AG04450 (cell line): ENCODE measurements at regions of chr1 and their contacts with region 1.

Region 1: GRCh38 chr1:21368515-21369289 is 71.2 kb upstream of the NBPF3 start:
- DNase-seq: peak; percentile 59
- H3K4me3 ChIP-seq: no peak overlapping the region
- H3K27ac ChIP-seq: no peak overlapping the region
- H3K27me3 ChIP-seq: no peaks in the 10 kb centered on the region
- CTCF ChIP-seq: peak; percentile 100

Region 2: DNA sequence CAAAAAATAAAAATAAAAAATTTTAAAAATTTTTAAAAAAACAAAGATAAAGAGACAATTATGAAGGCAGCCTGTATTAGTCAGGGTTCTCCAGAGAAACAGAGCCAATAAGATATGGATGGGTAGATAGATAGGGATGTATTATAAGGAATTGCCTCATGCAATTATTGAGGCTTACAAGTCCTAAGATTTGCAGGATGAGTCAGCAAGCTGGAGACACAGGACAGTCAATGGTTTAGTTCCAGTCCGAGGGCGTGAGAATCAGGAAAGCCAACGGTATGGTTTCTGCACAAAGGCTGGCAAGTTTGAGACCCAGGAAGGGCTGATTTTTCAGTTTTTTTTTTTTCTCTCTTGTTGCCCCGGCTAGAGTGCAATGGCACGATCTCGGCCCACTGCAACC is 167.9 kb before region 1 on chr1:
- CTCF ChIA-PET with region 1: interaction called, 21 read pairs
- POLR2A ChIA-PET with region 1: no interaction called
- DNase-seq: no peak
- H3K4me3 ChIP-seq: no peak overlapping the region
- H3K27ac ChIP-seq: no peak overlapping the region
- H3K27me3 ChIP-seq: no peaks in the 10 kb centered on the region
- CTCF ChIP-seq: no peak

Region 3: DNA sequence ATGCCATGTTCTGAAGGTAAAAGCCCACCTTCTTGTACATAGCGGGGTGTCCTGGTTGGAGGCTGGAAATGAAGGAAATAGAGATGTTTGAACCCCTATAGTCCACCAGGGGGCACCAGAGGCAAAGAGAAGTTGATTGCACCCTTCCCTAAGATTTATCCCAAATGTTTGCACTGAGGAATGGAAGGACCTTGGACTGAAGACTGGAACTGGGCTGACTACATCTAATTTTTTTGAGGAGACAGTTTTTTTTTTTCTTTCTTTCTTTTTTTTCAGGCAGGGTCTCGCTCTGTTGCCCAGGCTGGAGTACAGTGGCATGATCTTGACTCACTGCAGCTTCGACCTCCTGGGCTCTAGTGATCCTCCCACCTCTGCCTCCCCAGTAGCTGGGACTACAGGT is 136.7 kb before region 1 on chr1:
- CTCF ChIA-PET with region 1: interaction called, 248 read pairs
- POLR2A ChIA-PET with region 1: interaction called, 8 read pairs
- DNase-seq: no peak
- H3K4me3 ChIP-seq: no peak overlapping the region
- H3K27ac ChIP-seq: no peak overlapping the region
- H3K27me3 ChIP-seq: no peaks in the 10 kb centered on the region
- CTCF ChIP-seq: peak; percentile 77

Region 4: DNA sequence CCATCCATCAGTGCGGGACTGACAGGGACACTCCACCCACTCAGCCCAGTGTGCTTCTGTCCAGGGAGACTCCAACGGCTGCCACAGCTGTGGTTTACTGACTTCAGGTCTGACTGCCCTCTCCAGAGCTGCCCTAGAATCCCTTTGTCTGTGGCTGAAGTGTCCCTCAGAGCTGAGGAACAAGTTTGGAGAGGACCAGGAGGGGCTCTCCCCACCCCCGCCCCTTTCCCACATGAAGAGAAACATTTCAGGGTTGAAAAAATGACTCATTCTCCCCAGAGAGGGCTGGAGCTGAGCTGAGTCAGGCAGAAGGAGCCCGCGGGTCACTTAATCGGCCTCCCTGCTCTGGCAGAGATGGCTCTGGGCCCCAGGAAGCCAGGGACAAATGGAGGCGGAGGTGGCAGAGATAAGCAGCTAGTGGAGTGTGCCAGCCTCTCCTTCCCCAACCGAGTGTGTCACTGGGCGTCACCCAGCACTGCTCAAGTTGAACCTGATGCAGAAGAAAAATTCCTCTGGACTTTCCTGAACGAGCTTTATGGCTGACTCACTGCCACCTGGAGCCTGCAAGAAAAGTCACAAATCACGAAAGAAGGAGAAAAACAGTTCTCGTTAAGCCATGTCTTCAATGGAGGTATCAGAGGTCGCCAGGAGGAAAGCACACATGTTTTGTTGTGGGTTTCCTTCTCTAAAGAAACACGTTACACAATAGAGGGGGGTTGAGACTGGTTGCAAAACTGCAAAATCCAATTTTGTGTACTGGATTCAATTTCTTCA is 44.1 kb before region 1 on chr1:
- CTCF ChIA-PET with region 1: interaction called, 11 read pairs
- POLR2A ChIA-PET with region 1: no interaction called
- DNase-seq: no peak
- H3K4me3 ChIP-seq: peak overlapping the region; percentile 13; the same call in 1 of the 2 replicates
- H3K27ac ChIP-seq: peak overlapping the region; percentile 95
- H3K27me3 ChIP-seq: no peaks in the 10 kb centered on the region
- CTCF ChIP-seq: no peak

Region 5: DNA sequence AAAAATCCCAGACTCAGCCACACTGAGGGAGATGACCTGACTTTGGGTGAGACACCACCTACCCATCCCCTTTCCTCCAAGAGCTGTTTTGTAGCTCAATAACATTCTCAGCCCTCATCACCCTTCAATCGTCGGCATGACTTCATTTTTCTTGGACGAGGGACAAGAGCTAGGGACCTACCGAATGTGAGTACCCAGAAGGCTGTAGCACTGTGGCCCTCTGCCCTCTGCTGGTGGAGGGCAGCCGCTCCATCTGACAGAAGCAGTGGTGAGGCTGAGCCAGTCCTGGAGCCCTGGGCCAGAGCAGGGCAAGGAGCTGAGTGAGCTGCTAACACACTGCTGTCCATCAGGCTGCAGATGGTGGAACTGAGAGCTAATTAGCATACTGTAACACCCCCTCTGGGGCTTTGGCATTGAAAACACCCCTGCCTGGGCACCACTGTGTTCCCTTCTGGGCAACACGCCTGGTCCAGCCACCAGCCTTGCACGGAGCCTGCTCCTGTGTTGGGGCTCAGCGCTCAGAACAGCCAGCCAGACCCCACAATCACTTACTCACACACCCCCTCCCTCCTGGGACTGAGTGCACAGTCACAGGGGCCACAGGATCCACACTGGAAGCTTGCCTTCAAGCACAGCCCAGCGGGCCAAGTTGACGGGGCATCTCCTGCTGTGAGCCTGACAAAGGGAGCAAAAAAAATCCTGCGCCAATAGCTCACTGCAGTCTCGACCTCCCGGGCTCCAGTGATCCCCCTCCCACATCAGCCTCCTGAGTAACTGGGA is 122.3 kb after region 1 on chr1:
- CTCF ChIA-PET with region 1: interaction called, 31 read pairs
- POLR2A ChIA-PET with region 1: no interaction called
- DNase-seq: no peak
- H3K4me3 ChIP-seq: no peak overlapping the region
- H3K27ac ChIP-seq: no peak overlapping the region
- H3K27me3 ChIP-seq: peaks cover 13% of the 10 kb centered on the region
- CTCF ChIP-seq: peak; percentile 64

Region 6: GRCh38 chr1:21594935-21595897 is 226.5 kb after region 1 on chr1:
- CTCF ChIA-PET with region 1: interaction called, 56 read pairs
- POLR2A ChIA-PET with region 1: no interaction called
- DNase-seq: no peak
- H3K4me3 ChIP-seq: no peak overlapping the region
- H3K27ac ChIP-seq: no peak overlapping the region
- H3K27me3 ChIP-seq: peaks cover 11% of the 10 kb centered on the region
- CTCF ChIP-seq: peak; percentile 85

Region 7: DNA sequence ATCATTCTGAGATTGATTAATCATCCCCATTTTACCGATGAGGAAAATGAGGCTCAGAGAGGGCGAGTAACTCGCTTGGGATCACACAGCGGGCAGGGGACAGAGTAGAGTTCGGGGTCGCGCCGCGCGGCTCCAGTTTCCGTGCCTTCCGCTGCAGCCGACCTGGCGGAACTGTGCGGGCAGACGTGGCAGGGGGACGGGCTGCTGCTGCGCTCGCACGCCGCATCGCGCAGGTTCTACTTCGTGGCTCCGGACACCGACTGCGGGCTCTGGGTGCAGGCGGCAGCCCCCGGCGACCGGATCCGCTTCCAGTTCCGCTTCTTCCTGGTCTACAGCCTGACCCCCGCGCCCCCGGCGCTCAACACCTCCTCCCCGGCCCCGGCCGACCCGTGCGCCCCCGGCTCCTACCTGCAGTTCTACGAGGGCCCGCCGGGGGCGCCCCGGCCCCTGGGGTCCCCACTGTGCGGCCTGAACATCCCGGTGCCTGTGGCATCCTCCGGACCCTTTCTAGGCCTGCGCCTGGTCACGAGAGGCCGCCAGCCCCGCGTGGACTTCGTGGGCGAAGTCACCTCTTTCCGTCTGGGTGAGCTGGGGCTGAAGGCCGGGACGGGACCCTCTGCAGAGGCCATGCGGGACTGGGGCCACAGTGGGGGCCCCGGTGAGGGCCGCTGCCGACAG is 445.7 kb after region 1 on chr1:
- CTCF ChIA-PET with region 1: no interaction called
- POLR2A ChIA-PET with region 1: no interaction called
- DNase-seq: no peak
- H3K4me3 ChIP-seq: peak overlapping the region; percentile 44
- H3K27ac ChIP-seq: no peak overlapping the region
- H3K27me3 ChIP-seq: peaks cover 3% of the 10 kb centered on the region
- CTCF ChIP-seq: peak; percentile 55